Transverse colon (tissue), 4 donors: ENCODE measurements at regions of chr6 and their contacts with region 1.

Region 1: DNA sequence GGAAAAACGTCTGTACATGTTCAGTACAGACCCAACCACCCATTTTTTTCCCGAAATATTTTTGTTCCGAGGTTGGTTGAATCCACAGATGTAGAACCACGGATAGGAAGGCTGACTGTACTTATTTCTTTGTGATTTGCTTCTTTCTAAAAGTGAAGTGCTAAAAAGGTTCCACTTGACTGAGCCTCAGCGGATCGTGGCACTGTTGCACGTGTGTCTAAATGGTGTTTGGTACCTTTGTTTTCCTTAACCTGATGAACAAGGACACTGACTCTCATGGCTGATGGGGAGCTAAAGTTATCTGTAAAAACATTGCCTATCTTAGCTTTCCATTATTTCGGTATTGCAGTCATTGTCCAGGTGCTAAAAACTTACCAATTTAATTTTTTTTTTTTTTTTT is 6.2 kb downstream of the BPHL start:
- DNase-seq: no peak
- H3K4me3 ChIP-seq: no peak overlapping the region
- H3K27ac ChIP-seq: no peak overlapping the region
- H3K4me1 ChIP-seq: peaks cover 0 to 4% (median 2%) of the 10 kb centered on the region in 4 donors
- H3K27me3 ChIP-seq: no peaks in the 10 kb centered on the region
- CTCF ChIP-seq: no peak
- EP300 ChIP-seq: no peak
- POLR2A ChIP-seq: no peak

Region 2: DNA sequence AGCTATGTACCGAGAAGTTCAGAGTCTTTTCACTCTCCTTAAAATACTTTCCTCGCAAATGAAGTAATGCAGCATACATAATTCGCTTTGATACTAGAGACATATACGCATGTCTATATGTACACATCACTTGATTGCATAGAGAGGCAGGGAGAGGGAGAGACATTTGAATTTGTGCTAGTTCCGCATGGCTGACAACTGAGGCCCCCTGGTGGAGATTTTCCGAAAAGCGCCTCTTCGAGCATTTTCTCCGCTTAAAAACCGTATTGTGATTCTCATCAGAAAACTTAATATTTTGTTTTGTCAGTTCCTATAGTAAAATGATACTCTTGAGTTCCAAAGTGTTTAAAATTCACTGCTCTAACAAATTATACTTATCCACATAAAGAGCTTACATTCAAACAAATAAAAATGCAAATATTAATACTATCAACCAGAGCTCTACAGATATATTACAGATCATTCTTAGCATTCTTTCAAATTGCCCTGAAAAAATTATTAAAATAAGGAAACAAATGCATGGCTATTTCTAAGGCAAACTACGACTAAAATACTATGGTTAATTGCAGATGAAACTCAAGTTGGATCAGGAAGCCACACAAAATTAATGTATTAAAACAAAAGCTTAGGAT is 374.6 kb before region 1 on chr6:
- in situ Hi-C with region 1: no loop called
- intact Hi-C with region 1: no loop called
- DNase-seq: peak; percentile 70
- H3K4me3 ChIP-seq: no peak overlapping the region
- H3K27ac ChIP-seq: no peak overlapping the region
- H3K4me1 ChIP-seq: peaks cover 0 to 8% (median 0%) of the 10 kb centered on the region in 4 donors
- H3K27me3 ChIP-seq: no peaks in the 10 kb centered on the region
- CTCF ChIP-seq: peak; percentile 67 to 88 (median 87)
- EP300 ChIP-seq: no peak
- POLR2A ChIP-seq: no peak

Region 3: GRCh38 chr6:2959909-2960719 is 164.6 kb before region 1 on chr6:
- in situ Hi-C with region 1: no loop called
- intact Hi-C with region 1: no loop called
- DNase-seq: no peak
- H3K4me3 ChIP-seq: no peak overlapping the region
- H3K27ac ChIP-seq: peak overlapping the region; percentile 18 to 65 (median 56)
- H3K4me1 ChIP-seq: peaks cover 10 to 52% (median 24%) of the 10 kb centered on the region in 4 donors
- H3K27me3 ChIP-seq: no peaks in the 10 kb centered on the region
- CTCF ChIP-seq: no peak
- EP300 ChIP-seq: no peak
- POLR2A ChIP-seq: no peak

Region 4: DNA sequence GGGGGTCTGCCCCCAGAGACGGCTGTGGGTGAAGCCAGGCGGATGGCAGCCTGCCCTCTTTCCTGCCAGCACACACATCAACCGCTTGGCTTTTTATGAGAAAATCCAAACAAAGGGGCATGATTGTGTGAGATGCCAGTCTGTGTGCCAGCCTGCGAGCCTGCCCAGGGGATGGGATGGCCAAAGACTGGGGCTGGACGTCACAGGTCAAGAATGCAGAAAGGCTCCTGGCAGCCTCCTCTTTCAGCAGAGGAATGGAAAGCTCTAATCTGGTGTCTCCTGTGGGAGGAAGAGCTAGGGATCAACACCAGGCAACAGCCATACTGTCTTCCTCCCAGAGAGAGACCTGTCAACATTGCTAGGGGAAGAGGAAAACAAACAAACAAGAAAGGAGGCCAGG is 87.0 kb after region 1 on chr6:
- in situ Hi-C with region 1: no loop called
- intact Hi-C with region 1: no loop called
- DNase-seq: no peak
- H3K4me3 ChIP-seq: no peak overlapping the region
- H3K27ac ChIP-seq: peak overlapping the region in 3 of 4 donors; percentile 49 to 53 (median 52)
- H3K4me1 ChIP-seq: peaks cover 0 to 8% (median 0%) of the 10 kb centered on the region in 4 donors
- H3K27me3 ChIP-seq: no peaks in the 10 kb centered on the region
- CTCF ChIP-seq: no peak
- EP300 ChIP-seq: no peak
- POLR2A ChIP-seq: no peak

Region 5: DNA sequence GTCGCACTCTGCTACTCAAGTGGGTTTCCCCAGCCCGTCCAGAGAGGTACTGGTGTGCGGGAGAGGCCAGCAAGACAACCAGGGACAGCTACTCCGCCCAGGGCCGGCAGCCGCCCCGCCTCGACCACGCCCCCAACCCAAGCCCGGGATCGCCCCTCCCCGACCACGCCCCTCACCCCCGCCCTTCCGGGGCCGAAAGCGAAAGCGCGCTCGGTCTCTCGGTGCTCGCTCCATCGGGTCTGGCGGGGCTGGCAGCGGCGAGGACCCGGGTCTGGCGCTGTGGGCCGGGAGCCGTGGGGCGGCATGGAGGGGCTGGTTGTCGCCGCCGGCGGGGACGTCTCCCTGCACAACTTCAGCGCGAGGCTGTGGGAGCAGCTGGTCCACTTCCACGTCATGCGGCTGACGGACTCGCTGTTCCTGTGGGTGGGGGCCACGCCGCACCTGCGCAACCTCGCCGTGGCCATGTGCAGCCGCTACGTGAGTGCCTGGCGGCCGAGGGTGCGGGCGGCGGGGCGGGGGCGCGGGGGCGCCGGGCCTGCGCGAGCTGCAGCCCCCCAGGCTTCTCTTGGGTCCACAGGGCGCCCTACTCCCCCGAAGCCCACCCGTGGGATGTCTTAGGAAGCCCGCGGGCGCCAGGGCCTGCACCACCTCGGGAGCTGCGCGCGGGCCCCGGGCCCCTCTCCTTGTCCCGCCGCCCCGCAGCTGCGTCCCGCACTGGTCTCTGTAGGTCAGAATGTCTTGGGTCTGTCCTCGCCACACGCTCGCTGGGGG is 134.2 kb after region 1 on chr6 and contains the start of gene PSMG4:
- in situ Hi-C with region 1: loop called in 3 of 4 experiments (anchors 5 to 10 kb)
- intact Hi-C with region 1: loop called (anchors 5 kb)
- DNase-seq: peak; percentile 98
- H3K4me3 ChIP-seq: peak within 1 kb of the TSS; percentile 71 to 90 (median 88)
- H3K27ac ChIP-seq: peak within 1 kb of the TSS; percentile 82 to 87 (median 86)
- H3K4me1 ChIP-seq: peaks cover 15 to 26% (median 23%) of the 10 kb centered on the region in 4 donors
- H3K27me3 ChIP-seq: no peaks in the 10 kb centered on the region
- CTCF ChIP-seq: no peak
- EP300 ChIP-seq: no peak
- POLR2A ChIP-seq: peak; percentile 65
- total RNA-seq, gene PSMG4: 10.1 to 22.7 (median 16.7) TPM

Region 6: DNA sequence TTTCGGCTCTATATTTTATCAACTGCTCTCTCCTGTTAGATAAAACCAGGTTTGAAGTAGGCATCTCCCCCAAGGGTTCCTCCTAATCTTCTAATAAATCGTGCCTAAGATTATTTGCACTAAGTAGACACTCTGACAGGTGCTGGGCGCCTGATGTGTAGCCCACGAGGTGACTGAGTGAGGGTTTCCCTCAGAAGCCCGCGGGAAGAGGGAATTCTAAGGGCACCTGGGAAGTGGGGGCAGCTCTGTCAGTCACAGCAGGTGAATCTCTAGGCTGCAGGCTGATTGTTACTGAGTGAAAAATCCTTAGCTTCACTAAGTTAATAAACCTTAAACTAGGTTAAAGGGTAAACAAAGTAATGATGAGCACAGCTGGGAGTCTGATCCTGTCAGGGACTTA is 558.7 kb after region 1 on chr6:
- in situ Hi-C with region 1: no loop called
- intact Hi-C with region 1: no loop called
- DNase-seq: no peak
- H3K4me3 ChIP-seq: no peak overlapping the region
- H3K27ac ChIP-seq: no peak overlapping the region
- H3K4me1 ChIP-seq: no peaks in the 10 kb centered on the region
- H3K27me3 ChIP-seq: no peaks in the 10 kb centered on the region
- CTCF ChIP-seq: no peak
- EP300 ChIP-seq: no peak
- POLR2A ChIP-seq: no peak

Region 7: GRCh38 chr6:3732345-3733141 is 607.9 kb after region 1 on chr6:
- in situ Hi-C with region 1: loop called (anchors 10 to 25 kb)
- intact Hi-C with region 1: no loop called
- DNase-seq: peak; percentile 77
- H3K4me3 ChIP-seq: no peak overlapping the region
- H3K27ac ChIP-seq: no peak overlapping the region
- H3K4me1 ChIP-seq: peaks cover 0 to 3% (median 0%) of the 10 kb centered on the region in 4 donors
- H3K27me3 ChIP-seq: no peaks in the 10 kb centered on the region
- CTCF ChIP-seq: peak; percentile 84 to 86 (median 85)
- EP300 ChIP-seq: no peak
- POLR2A ChIP-seq: no peak